Caco-2 (cell line): ENCODE measurements at regions of chr2 and their contacts with region 1.

Region 1: GRCh38 chr2:38076606-38077430 is 867 bp upstream of the CYP1B1 start:
- DNase-seq: peak; percentile 79 to 84
- H3K4me3 ChIP-seq: peak overlapping the region; percentile 56
- H3K4me3 Mint-ChIP-seq: peak overlapping the region; percentile 84
- H3K27ac Mint-ChIP-seq: peak overlapping the region; percentile 76
- H3K4me1 ChIP-seq: peaks cover 24% of the 10 kb centered on the region
- H3K4me1 Mint-ChIP-seq: peaks cover 38% of the 10 kb centered on the region
- H3K27me3 ChIP-seq: no peaks in the 10 kb centered on the region
- H3K27me3 Mint-ChIP-seq: no peaks in the 10 kb centered on the region
- CTCF ChIP-seq: peak; percentile 1 to 53

Region 2: GRCh38 chr2:37982147-37982582 is 94.7 kb before region 1 on chr2:
- CTCF ChIA-PET with region 1: interaction called, 3 read pairs
- POLR2A ChIA-PET with region 1: no interaction called
- intact Hi-C with region 1: loop called (anchors 5 kb)
- DNase-seq: peak; percentile 69 to 81
- H3K4me3 ChIP-seq: peak overlapping the region; percentile 16; the same call in 1 of the 2 replicates
- H3K4me3 Mint-ChIP-seq: peak overlapping the region; percentile 2
- H3K27ac Mint-ChIP-seq: no peak overlapping the region
- H3K4me1 ChIP-seq: no peaks in the 10 kb centered on the region
- H3K4me1 Mint-ChIP-seq: peaks cover 12% of the 10 kb centered on the region
- H3K27me3 ChIP-seq: no peaks in the 10 kb centered on the region; the same call in 1 of the 2 replicates
- H3K27me3 Mint-ChIP-seq: no peaks in the 10 kb centered on the region
- CTCF ChIP-seq: peak; percentile 91 to 92

Region 3: DNA sequence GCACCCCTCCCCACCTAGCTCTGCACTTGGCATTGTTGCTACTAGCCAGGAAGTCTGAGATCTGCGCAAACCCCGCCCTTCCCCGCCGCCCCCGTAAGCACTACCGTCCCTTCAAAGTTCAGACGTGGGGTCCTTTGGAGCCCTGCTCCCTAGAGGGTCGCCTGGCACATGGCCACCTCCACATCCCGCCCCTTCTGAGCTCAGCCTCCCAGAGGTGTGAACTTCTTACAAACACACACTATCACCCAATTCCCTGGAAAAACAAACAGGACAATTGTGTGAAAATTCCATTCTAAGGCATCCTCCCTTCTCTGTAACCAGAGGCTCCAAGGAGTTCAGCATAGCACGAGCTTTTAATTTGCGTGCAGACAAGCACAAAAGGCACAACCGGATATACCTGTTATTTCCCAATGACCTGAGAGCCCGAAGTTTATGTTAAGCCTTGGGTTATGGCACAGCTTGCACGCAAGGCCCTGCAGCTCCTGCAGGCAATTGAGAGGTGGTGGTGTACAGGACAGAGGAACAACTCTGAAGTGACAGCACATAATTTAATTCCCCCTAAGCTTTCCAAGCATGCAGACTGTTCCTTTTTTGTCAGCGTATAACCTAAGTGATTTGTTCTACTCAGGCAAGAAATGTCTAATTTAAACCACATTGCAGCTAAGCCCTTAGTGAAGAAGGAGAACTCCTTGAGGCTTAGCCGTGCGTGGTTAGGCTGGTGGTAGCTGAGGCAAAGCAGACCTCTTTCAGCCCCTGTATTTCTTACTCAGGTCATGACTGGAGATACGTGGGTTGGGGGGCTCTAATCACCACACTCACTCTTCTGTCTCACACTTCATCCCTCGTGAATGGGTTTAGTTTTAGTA is 19.4 kb after region 1 on chr2:
- CTCF ChIA-PET with region 1: interaction called, 26 read pairs
- POLR2A ChIA-PET with region 1: interaction called, 12 read pairs
- intact Hi-C with region 1: loop called (anchors 1 kb)
- DNase-seq: peak; percentile 90 to 92
- H3K4me3 ChIP-seq: no peak overlapping the region
- H3K4me3 Mint-ChIP-seq: peak overlapping the region; percentile 60
- H3K27ac Mint-ChIP-seq: peak overlapping the region; percentile 92
- H3K4me1 ChIP-seq: peaks cover 46% of the 10 kb centered on the region
- H3K4me1 Mint-ChIP-seq: peaks cover 46% of the 10 kb centered on the region
- H3K27me3 ChIP-seq: no peaks in the 10 kb centered on the region
- H3K27me3 Mint-ChIP-seq: no peaks in the 10 kb centered on the region
- CTCF ChIP-seq: no peak

Region 4: GRCh38 chr2:38109732-38110181 is 32.9 kb after region 1 on chr2:
- CTCF ChIA-PET with region 1: interaction called, 16 read pairs
- POLR2A ChIA-PET with region 1: interaction called, 3 read pairs
- intact Hi-C with region 1: no loop called
- DNase-seq: no peak
- H3K4me3 ChIP-seq: no peak overlapping the region
- H3K4me3 Mint-ChIP-seq: no peak overlapping the region
- H3K27ac Mint-ChIP-seq: peak overlapping the region; percentile 20
- H3K4me1 ChIP-seq: peaks cover 22% of the 10 kb centered on the region
- H3K4me1 Mint-ChIP-seq: peaks cover 8% of the 10 kb centered on the region
- H3K27me3 ChIP-seq: no peaks in the 10 kb centered on the region
- H3K27me3 Mint-ChIP-seq: no peaks in the 10 kb centered on the region
- CTCF ChIP-seq: no peak

Region 5: GRCh38 chr2:38610851-38611801 is 534.3 kb after region 1 on chr2:
- CTCF ChIA-PET with region 1: no interaction called
- POLR2A ChIA-PET with region 1: no interaction called
- intact Hi-C with region 1: no loop called
- DNase-seq: peak; percentile 47 to 54
- H3K4me3 ChIP-seq: no peak overlapping the region
- H3K4me3 Mint-ChIP-seq: peak overlapping the region; percentile 37
- H3K27ac Mint-ChIP-seq: peak overlapping the region; percentile 63
- H3K4me1 ChIP-seq: peaks cover 19% of the 10 kb centered on the region
- H3K4me1 Mint-ChIP-seq: peaks cover 33% of the 10 kb centered on the region
- H3K27me3 ChIP-seq: no peaks in the 10 kb centered on the region
- H3K27me3 Mint-ChIP-seq: no peaks in the 10 kb centered on the region
- CTCF ChIP-seq: no peak